GM10248 (cell line): ENCODE measurements at regions of chr5 and their contacts with region 1.

Region 1: DNA sequence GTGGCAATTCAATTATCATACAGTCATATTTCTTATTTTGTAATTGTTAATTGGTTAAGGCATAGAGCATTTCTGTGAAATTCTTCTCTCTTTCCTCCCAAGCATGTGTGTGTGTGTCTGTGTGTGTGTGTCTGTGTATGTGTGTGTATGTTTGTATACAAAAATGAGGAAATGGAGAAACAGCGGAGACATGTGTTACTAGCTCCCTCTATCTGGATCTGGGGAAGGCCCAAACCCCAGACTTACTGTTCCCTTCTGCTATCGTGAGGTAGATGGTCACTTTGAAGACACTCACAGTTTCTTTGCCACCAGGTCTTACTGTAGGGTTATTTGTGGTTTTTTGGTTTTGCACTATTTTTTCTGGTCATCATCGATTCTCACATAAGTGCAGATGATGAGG is 11.4 kb upstream of the C5orf63 start:
- DNase-seq: no peak
- CTCF ChIP-seq: no peak

Region 2: GRCh38 chr5:127046343-127047072 is 38.1 kb before region 1 on chr5:
- CTCF ChIA-PET with region 1: no interaction called
- POLR2A ChIA-PET with region 1: no interaction called
- DNase-seq: no peak
- CTCF ChIP-seq: no peak

Region 3: DNA sequence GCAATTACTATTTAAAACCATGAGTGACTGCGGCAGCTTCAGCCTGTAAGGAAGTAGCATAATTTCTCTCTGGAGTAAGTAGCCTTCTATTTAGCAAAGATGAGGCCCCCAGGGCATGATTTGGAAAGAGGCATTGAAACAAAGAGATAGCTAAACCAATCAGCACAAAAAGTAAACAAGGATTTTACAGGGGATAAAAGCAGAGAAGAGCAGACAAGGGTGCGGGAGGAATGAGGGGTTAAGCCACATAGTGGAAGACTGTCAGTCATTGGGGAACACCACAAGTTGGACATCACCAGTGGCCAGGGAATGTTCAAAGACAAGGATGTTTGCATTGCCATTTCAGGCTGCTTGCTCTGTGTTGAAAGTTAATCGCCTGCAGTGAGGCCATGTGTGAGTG is 12.6 kb after region 1 on chr5:
- CTCF ChIA-PET with region 1: interaction called, 13 read pairs
- POLR2A ChIA-PET with region 1: no interaction called
- DNase-seq: no peak
- CTCF ChIP-seq: no peak

Region 4: DNA sequence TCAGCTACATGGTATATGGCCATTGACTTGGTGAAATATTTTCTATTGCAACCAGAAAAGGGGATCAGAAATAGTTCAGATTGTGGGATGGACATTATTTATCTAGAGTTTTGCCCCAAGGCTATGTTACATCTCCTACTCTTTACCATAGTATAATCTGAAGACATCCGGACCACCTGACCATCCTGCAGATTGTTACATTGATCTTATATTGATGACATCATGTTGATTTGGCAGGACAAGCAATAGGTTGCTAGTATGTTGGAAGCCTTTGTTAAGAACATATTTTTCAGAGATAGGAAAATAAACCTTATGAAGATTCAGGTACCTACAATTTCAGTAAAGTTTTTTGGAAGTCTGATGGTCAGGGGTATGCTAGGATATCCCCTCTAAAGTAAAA is 33.0 kb after region 1 on chr5:
- CTCF ChIA-PET with region 1: no interaction called
- POLR2A ChIA-PET with region 1: no interaction called
- DNase-seq: no peak
- CTCF ChIP-seq: no peak